Breast epithelium (tissue), 4 donors: ENCODE measurements at regions of chr5 and their contacts with region 1.

Region 1: GRCh38 chr5:1652596-1653345 is 129.0 kb upstream of the LPCAT1 start:
- DNase-seq: no peak
- H3K4me3 ChIP-seq: no peak overlapping the region
- H3K27ac ChIP-seq: no peak overlapping the region
- H3K4me1 ChIP-seq: peaks cover 0 to 4% of the 10 kb centered on the region in 2 donors
- H3K27me3 ChIP-seq: peaks cover 0 to 25% of the 10 kb centered on the region in 2 donors
- CTCF ChIP-seq: no peak
- POLR2A ChIP-seq: no peak

Region 2: DNA sequence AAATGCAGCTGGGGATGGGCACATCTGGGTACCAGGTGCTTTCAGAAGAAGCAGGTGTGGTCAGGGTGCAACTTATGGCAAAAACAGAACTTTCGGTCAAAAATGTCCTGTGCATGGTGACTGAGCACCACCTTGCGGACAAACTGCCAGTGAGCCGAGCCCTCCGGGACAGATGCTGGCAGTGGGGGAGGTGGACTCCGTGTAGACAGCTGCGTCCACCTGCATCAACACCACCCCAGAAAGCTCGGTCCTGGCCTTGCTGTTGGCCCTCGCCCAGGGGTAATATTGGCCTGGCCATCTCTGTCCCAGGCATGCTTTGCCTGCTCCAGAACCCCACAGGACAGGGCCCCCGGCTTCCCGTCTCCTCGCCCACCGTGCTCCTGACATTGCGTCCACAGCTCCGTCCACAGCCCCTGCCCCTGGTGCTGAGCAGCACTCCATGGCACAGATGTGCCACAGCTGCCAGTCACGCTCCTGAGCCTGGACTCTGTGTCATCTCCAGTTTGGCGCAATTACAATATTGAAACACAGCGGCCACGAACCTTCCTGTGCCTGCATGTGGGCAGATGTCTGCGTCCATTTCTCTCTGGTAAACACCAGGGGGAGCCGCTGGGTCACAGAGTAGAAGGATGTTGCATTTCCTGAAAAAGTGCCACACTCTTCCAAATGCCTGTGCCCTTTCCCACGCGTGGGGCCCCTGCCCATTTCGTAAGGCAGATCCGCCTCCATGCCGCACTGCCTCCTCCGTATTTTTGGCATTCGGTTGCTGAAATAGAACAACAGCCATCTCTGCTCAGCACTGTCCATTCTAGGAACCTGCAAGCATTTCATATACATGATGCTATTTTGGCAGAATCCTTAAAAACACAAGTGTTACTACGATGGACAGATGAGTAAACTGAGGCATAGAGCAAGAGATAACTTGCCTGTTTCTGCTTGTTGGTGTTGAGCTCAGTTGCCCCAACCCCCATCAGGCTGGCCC is 484.8 kb before region 1 on chr5:
- intact Hi-C with region 1: loop called (anchors 5 kb)
- DNase-seq: peak; percentile 66 to 70
- H3K4me3 ChIP-seq: peak overlapping the region in 2 of 3 donors; percentile 30 to 50
- H3K27ac ChIP-seq: no peak overlapping the region
- H3K4me1 ChIP-seq: peaks cover 0 to 6% of the 10 kb centered on the region in 2 donors
- H3K27me3 ChIP-seq: no peaks in the 10 kb centered on the region
- CTCF ChIP-seq: peak; percentile 37 to 67 (median 57)
- POLR2A ChIP-seq: no peak

Region 3: GRCh38 chr5:1685066-1685465 is 32.3 kb after region 1 on chr5:
- intact Hi-C with region 1: no loop called
- DNase-seq: peak in 1 of 2 donors; percentile 11
- H3K4me3 ChIP-seq: no peak overlapping the region
- H3K27ac ChIP-seq: no peak overlapping the region
- H3K4me1 ChIP-seq: no peaks in the 10 kb centered on the region
- H3K27me3 ChIP-seq: peaks cover 0 to 5% of the 10 kb centered on the region in 2 donors
- CTCF ChIP-seq: no peak
- POLR2A ChIP-seq: no peak